OCI-LY7 (cell line): ENCODE measurements at regions of chr6 and their contacts with region 1.

Region 1: DNA sequence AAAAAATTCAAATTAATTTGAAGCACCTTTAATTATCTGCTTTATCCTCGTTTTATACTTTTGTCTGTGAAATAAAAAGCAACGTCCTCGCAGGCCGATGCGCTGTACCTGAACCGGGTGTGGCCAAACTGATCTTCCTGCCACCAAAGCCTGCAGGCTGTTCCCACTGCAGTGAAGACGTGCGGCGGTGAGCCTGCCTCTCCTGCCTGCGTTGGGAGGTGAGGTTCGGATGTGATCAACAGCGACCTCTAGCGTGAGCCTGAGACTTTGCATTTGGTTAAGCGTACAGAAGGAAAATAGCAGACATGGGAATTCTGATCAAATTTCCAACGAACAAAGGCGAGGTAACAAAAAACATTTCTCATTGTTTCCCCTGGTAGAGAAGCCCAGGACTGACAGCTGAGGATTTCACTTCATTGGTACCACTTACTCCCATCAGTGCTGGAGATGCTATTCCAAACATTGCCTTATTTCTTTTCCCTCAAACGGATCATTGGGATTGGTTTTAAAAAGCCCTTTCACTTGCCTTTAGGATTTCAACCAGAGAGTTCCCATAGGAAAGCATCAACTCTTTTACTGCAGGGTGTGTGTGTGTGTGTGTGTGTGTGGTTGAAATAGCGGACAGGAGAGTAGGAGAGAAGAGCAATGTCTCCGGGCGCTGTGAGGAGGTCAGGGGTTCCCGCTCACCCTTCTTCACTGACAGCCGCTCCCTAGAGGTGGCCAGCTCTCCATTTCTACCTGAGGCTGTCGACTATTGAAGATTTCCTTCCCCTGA is 56.6 kb upstream of the CCN6 start:
- DNase-seq: peak; percentile 79
- H3K4me3 ChIP-seq: no peak overlapping the region
- H3K27ac ChIP-seq: no peak overlapping the region
- H3K4me1 ChIP-seq: no peaks in the 10 kb centered on the region
- CTCF ChIP-seq: peak; percentile 97

Region 2: DNA sequence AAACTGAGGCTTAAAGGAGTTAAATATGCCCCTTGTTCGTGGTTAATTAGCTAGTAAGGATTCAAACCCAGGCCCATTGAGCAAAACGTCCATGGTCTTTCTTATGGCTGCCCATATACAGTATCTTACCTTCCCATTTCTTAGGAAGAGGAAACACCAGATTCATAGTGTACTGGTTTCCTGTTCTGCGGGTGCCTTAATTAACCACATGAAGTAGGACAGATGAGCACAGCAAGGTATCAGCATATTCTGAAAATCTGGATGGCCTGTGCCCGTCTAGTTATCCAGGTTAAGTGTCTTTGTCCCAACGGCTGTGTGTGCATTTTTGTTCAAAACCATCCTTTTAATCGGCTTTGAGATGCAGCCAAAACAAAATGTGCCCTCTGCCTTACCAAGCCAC is 298.1 kb before region 1 on chr6:
- CTCF ChIA-PET with region 1: no interaction called
- POLR2A ChIA-PET with region 1: no interaction called
- intact Hi-C with region 1: no loop called
- DNase-seq: no peak
- H3K4me3 ChIP-seq: no peak overlapping the region
- H3K27ac ChIP-seq: no peak overlapping the region
- H3K4me1 ChIP-seq: no peaks in the 10 kb centered on the region
- CTCF ChIP-seq: no peak

Region 3: GRCh38 chr6:111709615-111710398 is 287.5 kb before region 1 on chr6:
- CTCF ChIA-PET with region 1: no interaction called
- POLR2A ChIA-PET with region 1: no interaction called
- intact Hi-C with region 1: loop called (anchors 1 kb)
- DNase-seq: peak; percentile 74
- H3K4me3 ChIP-seq: no peak overlapping the region
- H3K27ac ChIP-seq: no peak overlapping the region
- H3K4me1 ChIP-seq: peaks cover 3% of the 10 kb centered on the region
- CTCF ChIP-seq: peak; percentile 95